Sigmoid colon (tissue), 7 donors: ENCODE measurements at regions of chr3 and their contacts with region 1.

Region 1: DNA sequence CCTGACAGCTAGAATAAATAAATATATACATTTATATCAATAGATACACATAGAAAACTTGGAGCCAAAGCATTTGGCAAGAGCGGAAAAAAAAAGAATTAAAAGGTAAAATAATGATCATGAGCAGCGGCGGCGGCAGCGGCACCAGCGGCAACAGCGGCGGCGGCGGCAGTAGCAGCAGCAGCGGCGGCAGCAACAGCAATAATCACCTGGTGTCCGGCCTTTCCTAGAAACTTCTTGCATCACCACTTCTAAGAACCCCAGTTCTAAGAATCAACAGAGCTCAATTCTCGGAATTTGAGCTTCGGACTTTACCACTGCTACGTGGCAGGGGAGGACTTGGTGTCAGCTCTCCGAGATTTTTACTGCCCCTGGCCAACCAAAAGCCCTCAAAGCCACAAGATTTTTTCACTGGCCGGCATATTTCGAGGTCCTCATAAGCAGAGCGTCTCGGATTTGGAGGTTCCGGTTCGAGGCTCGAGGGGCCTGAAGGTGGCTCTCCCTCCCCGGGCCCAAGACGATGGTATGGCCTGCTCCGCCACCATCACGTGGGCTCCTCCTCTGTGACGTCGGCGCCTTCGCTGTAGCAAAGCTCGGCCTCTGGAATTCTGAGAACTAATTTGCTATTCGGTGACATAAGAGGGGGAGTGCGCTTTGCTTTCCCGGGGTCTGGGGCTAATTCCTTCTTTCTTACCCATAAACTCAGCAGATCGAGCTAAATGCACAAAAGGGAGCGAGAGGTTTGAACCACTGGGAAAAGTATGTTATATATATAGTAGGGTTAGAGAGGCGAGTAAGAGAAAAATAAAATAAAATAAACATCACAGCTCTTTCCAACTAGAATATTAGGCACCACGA is at the start of gene BCL6:
- DNase-seq: peak; percentile 98
- H3K4me3 ChIP-seq: peak within 1 kb of the TSS; percentile 53 to 88 (median 68)
- H3K27ac ChIP-seq: peak within 1 kb of the TSS; percentile 90 to 99 (median 96)
- H3K4me1 ChIP-seq: peaks cover 3 to 62% (median 44%) of the 10 kb centered on the region in 4 donors
- H3K27me3 ChIP-seq: no peaks in the 10 kb centered on the region
- CTCF ChIP-seq: peak in 1 of 4 experiments; percentile 6
- EP300 ChIP-seq: peak; percentile 72 to 98 (median 89)
- POLR2A ChIP-seq: peak; percentile 95 to 99
- total RNA-seq, gene BCL6: 51.4 to 233 (median 80.7) TPM

Region 2: GRCh38 chr3:187678726-187679267 is 66.6 kb before region 1 on chr3:
- intact Hi-C with region 1: no loop called
- DNase-seq: no peak
- H3K4me3 ChIP-seq: no peak overlapping the region
- H3K27ac ChIP-seq: no peak overlapping the region
- H3K4me1 ChIP-seq: peaks cover 0 to 22% (median 2%) of the 10 kb centered on the region in 4 donors
- H3K27me3 ChIP-seq: no peaks in the 10 kb centered on the region
- CTCF ChIP-seq: peak; percentile 40 to 58 (median 55)
- EP300 ChIP-seq: no peak
- POLR2A ChIP-seq: no peak

Region 3: GRCh38 chr3:187896646-187897045 is 151.2 kb after region 1 on chr3:
- intact Hi-C with region 1: no loop called
- DNase-seq: peak; percentile 53
- H3K4me3 ChIP-seq: no peak overlapping the region
- H3K27ac ChIP-seq: no peak overlapping the region
- H3K4me1 ChIP-seq: no peaks in the 10 kb centered on the region
- H3K27me3 ChIP-seq: no peaks in the 10 kb centered on the region
- CTCF ChIP-seq: no peak
- EP300 ChIP-seq: no peak
- POLR2A ChIP-seq: no peak

Region 4: DNA sequence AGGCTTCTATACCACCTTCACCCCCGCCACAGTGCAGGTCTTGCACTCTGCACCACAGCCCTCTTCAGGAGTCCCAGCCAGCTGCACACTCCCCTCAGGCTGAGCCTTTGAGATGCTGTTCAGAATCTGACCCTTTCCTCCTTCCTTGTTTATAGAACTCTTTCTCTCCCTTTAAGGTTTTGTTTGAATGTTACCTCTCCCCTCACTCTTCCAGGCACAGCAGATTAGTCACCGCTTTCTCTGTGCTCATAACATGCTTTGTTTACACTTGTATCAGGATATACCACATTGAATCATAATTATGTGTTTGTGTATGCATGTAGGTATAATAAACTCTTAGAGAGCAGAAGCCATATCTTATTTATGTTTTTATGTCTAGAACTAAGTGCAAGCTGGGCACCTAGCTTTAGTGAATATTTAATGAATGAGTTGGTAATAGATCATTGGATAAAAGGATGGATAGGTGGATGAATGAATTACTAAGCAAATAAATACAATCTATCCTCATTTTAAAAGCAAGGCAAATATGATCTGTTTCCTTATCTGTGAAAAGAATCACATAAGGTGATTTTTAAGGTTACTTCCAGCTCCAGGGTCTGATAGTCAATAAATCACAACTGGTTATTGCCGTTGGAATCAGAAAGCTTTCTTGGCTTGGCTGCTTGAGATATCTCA is 168.3 kb after region 1 on chr3:
- intact Hi-C with region 1: loop called (anchors 5 kb)
- DNase-seq: no peak
- H3K4me3 ChIP-seq: no peak overlapping the region
- H3K27ac ChIP-seq: peak overlapping the region; percentile 13 to 73 (median 53)
- H3K4me1 ChIP-seq: peaks cover 0 to 47% (median 42%) of the 10 kb centered on the region in 4 donors
- H3K27me3 ChIP-seq: no peaks in the 10 kb centered on the region
- CTCF ChIP-seq: no peak
- EP300 ChIP-seq: no peak
- POLR2A ChIP-seq: no peak

Region 5: DNA sequence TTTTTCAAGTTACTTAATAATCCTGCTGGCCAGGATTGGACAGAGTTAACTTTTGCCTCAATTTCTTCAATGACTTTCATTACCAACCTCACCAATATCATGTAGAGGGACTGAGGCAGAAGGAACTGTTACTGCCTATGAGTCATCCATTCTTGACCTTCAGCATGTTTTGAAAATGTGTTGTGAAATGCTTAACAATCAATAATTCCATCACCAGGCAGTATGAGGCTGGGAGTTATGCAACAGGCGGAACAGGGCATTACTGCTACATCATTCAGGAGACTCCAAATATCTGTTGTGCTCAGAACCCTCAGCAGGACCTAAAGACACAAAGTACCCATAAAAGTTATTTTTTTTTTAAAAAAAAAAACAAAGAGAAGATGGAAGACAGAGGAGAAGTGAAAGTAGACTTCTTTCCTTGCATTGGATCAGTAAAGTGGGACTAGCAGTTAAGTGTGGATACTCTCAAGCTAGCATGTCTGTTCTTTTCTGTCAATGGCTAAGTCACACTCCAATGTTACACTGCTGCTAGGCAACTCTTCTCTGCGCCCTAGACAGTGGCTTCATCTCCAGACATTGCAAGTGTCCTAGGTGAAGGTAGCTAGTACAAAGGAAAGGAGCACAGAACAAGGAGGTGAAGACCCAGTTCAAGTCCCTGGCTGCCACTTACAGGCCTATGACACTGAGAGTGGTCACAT is 223.6 kb after region 1 on chr3:
- intact Hi-C with region 1: no loop called
- DNase-seq: no peak
- H3K4me3 ChIP-seq: no peak overlapping the region
- H3K27ac ChIP-seq: no peak overlapping the region
- H3K4me1 ChIP-seq: peaks cover 0 to 5% (median 0%) of the 10 kb centered on the region in 4 donors
- H3K27me3 ChIP-seq: no peaks in the 10 kb centered on the region
- CTCF ChIP-seq: no peak
- EP300 ChIP-seq: no peak
- POLR2A ChIP-seq: no peak

Region 6: DNA sequence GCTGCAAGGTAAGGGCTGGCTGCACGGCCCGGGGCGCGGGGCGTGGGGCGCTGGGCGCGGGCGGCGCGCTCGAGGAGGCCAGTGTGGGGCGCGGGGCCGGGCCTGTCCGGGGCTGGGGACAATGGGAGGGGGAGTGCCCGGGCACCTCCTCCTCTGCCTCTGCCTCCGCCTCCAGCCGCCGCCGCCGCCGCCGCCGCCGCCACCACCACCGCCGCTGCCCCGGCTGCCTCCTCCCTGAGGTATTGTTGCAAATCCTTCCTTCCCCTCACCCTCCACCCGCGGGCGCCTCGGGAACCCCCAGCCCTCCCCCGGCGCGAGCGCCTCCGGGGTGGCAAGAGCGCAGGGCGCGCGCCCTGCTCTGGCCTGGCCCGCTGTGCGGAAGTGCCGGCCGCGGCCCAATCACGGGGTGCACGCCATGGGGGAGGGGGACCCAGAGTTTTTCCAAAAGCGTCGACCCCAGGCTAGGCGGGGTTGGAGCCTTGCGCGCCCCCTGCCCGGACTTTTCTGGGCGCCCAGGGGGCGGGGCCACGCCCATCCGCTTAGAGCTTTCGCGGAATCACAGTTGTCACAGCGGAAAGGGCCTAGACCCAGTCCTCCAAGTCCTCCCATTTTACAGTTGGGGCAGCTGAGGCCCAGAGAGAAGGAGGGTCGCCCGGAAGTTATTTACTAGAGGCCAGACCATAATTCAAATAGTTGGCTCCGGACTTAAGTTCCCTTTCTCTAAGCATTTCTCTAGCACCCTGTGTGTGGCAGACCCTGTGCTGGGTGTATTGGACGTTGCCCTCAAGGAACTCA is 408.8 kb after region 1 on chr3 and contains the start of gene LPP:
- intact Hi-C with region 1: loop called (anchors 2 kb)
- DNase-seq: peak; percentile 92
- H3K4me3 ChIP-seq: peak within 1 kb of the TSS; percentile 68 to 93 (median 84)
- H3K27ac ChIP-seq: peak within 1 kb of the TSS; percentile 95 to 99 (median 98)
- H3K4me1 ChIP-seq: peaks cover 0 to 57% (median 47%) of the 10 kb centered on the region in 4 donors
- H3K27me3 ChIP-seq: no peaks in the 10 kb centered on the region
- CTCF ChIP-seq: no peak
- EP300 ChIP-seq: peak in 3 of 4 donors; percentile 2 to 64 (median 14)
- POLR2A ChIP-seq: no peak
- total RNA-seq, gene LPP: 824 to 1,773 (median 1,187) TPM

Region 7: GRCh38 chr3:188617988-188618701 is 872.7 kb after region 1 on chr3:
- intact Hi-C with region 1: loop called (anchors 10 kb)
- DNase-seq: no peak
- H3K4me3 ChIP-seq: no peak overlapping the region
- H3K27ac ChIP-seq: peak overlapping the region in 3 of 4 donors; percentile 8 to 55 (median 44)
- H3K4me1 ChIP-seq: peaks cover 0 to 31% (median 16%) of the 10 kb centered on the region in 4 donors
- H3K27me3 ChIP-seq: no peaks in the 10 kb centered on the region
- CTCF ChIP-seq: no peak
- EP300 ChIP-seq: peak in 1 of 4 donors; percentile 18
- POLR2A ChIP-seq: no peak

Region 8: GRCh38 chr3:188712248-188712924 is 967.0 kb after region 1 on chr3:
- intact Hi-C with region 1: loop called (anchors 10 kb)
- DNase-seq: no peak
- H3K4me3 ChIP-seq: no peak overlapping the region
- H3K27ac ChIP-seq: peak overlapping the region; percentile 19 to 82 (median 60)
- H3K4me1 ChIP-seq: peaks cover 0 to 53% (median 36%) of the 10 kb centered on the region in 4 donors
- H3K27me3 ChIP-seq: no peaks in the 10 kb centered on the region
- CTCF ChIP-seq: no peak
- EP300 ChIP-seq: peak in 3 of 4 donors; percentile 43 to 88 (median 86)
- POLR2A ChIP-seq: no peak